GM12878 (cell line): ENCODE measurements at regions of chr1 and their contacts with region 1.

Region 1: GRCh38 chr1:100366209-100366525 is 13.9 kb downstream of the CDC14A start:
- DNase-seq: no peak
- ATAC-seq: no peak
- H3K4me3 ChIP-seq: no peak overlapping the region
- H3K27ac ChIP-seq: no peak overlapping the region
- H3K4me1 ChIP-seq: no peaks in the 10 kb centered on the region; the same call in 1 of the 2 replicates
- H3K27me3 ChIP-seq: no peaks in the 10 kb centered on the region
- CTCF ChIP-seq: no peak
- EP300 ChIP-seq: no peak
- POLR2A ChIP-seq: no peak
- RAD21 ChIP-seq: no peak

Region 2: DNA sequence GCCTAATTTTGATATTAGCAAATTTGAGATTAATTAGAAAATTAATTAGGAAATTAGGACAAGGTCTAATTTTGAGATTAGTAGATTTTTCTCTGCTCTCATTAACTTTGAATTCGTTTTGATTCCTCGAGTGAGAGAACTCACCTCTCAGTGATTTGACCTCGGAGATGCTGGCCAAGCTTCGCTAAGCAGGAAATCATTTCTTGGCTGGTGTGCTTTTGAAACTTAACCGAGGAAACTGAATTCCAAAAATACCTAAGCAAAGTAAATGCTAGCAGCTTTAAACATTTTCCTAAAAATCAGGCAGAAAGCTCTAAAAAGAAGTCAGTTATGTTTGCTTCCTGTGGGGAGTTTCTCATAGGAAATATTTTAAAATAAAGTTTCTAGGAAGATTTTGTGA is 21.0 kb after region 1 on chr1:
- CTCF ChIA-PET with region 1: no interaction called
- POLR2A ChIA-PET with region 1: interaction called, 10 read pairs
- RAD21 ChIA-PET with region 1: interaction called, 3 read pairs
- SMC1A ChIA-PET with region 1: no interaction called
- in situ Hi-C with region 1: no loop called
- intact Hi-C with region 1: no loop called
- DNase-seq: no peak
- ATAC-seq: peak; percentile 58
- H3K4me3 ChIP-seq: no peak overlapping the region
- H3K27ac ChIP-seq: peak overlapping the region; percentile 46
- H3K4me1 ChIP-seq: peaks cover 23% of the 10 kb centered on the region
- H3K27me3 ChIP-seq: no peaks in the 10 kb centered on the region
- CTCF ChIP-seq: no peak
- EP300 ChIP-seq: no peak
- POLR2A ChIP-seq: no peak
- RAD21 ChIP-seq: no peak